ENCODE measurements at regions of chrX and their contacts with region 1.

Region 1: DNA sequence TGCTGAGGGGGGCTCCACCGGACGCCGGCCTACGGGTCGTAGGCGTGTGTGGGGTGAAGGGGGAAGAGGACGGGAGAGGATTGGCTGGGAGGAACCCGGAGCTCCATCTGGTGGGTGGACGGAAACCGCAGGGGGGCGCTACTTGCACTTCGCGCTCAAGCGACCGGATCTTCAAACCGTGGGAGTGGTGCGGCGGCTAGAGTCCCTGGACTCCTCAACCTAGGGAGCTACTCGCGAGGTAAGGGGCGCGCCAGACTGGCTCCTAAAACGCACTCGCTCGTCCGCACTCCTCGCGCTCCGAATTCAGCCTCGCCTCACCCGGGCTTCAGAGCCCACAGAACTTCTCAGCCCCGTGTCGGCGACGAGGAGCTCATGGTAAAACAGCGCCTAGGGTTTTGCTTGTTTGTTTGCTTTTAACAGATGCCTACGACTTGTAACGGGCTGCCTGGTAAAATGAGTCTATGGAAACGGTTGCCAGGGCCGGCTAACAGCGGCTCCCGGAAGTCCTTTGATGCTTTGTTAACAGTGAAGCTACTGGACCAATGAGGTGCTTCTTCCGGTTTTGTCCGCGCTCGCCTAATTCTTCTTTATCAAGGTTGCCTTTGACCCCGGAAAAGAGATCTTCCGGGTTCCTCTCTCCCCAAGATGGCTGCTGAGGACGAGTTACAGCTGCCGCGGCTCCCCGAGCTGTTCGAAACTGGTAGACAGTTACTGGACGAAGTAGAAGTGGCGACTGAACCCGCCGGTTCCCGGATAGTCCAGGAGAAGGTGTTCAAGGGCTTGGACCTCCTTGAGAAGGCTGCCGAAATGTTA is at the start of gene IGBP1:
- DNase-seq: peak; percentile 80
- H3K4me3 ChIP-seq: peak within 1 kb of the TSS; percentile 62 to 96 (median 79)
- H3K27ac ChIP-seq: peak within 1 kb of the TSS; percentile 95
- H3K4me1 ChIP-seq: peaks cover 16% of the 10 kb centered on the region
- H3K27me3 ChIP-seq: no peaks in the 10 kb centered on the region
- CTCF ChIP-seq: peak; percentile 63 to 79
- POLR2A ChIP-seq: no peak
- total RNA-seq, gene IGBP1: 38.1 and 40.4 TPM in 2 replicates

Region 2: DNA sequence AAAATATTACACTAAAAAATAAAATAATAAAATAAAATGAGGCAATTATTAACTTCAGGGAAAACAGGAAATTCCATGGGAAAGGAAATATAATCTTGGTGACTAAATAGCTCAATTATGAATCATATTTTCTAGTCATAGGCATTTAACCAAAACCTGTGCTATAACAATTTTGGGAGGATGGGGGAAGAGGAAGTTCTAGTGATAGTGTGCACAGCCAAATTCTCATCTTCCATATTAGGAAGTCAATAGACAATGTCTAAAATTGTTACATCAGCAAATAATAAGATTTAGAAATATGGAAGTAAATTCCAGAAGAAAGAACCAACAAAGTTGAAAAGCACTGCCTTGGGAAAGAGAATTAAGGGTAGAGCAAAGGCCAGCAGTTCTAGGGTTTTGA is 86.5 kb before region 1 on chrX:
- CTCF ChIA-PET with region 1: interaction called, 3 read pairs
- POLR2A ChIA-PET with region 1: no interaction called
- dilution Hi-C with region 1: no loop called
- intact Hi-C with region 1: loop called (anchors 1 kb)
- DNase-seq: peak; percentile 48
- H3K4me3 ChIP-seq: no peak overlapping the region
- H3K27ac ChIP-seq: peak overlapping the region; percentile 75
- H3K4me1 ChIP-seq: peaks cover 25% of the 10 kb centered on the region
- H3K27me3 ChIP-seq: no peaks in the 10 kb centered on the region
- CTCF ChIP-seq: no peak
- POLR2A ChIP-seq: no peak

Region 3: DNA sequence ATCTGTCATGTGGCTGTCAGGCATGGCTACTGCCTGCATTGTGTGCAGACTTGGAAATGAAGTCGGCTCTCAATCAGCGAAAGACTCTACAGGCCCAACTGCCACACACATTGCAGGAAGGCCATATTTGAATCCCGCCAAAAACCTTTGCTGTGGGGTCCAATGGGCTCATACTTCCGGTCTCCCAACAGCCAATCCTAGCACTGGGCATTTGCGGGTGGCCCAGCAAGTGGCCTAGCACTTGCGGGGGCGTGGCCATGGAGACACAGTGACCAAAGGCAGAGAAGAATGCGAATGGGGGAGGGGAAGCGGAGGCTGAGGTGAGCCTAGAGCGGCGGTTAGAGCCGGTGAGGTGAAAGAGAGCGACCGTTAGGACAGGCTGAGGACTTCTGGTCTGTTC is 71.4 kb before region 1 on chrX and contains the start of gene OTUD6A:
- CTCF ChIA-PET with region 1: no interaction called
- POLR2A ChIA-PET with region 1: no interaction called
- dilution Hi-C with region 1: no loop called
- intact Hi-C with region 1: no loop called
- DNase-seq: no peak
- H3K4me3 ChIP-seq: no peak within 1 kb of the TSS
- H3K27ac ChIP-seq: no peak within 1 kb of the TSS
- H3K4me1 ChIP-seq: no peaks in the 10 kb centered on the region
- H3K27me3 ChIP-seq: no peaks in the 10 kb centered on the region
- CTCF ChIP-seq: no peak
- POLR2A ChIP-seq: no peak
- total RNA-seq, gene OTUD6A: not detected in 2 replicates

Region 4: DNA sequence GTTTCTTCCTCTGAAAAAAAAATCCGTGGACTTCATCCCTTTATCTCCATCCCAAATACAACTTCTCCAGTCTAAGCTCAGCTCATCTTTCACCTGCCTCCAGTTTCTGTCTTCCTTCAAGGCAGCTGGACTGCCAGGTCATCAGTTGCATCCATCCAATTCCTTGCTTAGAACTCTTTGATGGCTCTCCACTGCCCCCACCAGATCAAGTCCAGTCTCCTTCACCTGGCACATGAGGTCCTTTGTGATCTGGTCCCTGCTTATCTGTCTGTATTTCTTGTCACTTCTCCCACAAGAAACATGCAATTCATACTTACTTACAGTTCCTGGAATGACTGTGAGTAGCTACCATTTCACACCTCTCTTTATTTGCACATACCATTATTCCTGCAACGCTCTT is 37.5 kb before region 1 on chrX:
- CTCF ChIA-PET with region 1: interaction called, 10 read pairs
- POLR2A ChIA-PET with region 1: no interaction called
- dilution Hi-C with region 1: no loop called
- intact Hi-C with region 1: loop called (anchors 1 kb)
- DNase-seq: peak; percentile 31
- H3K4me3 ChIP-seq: no peak overlapping the region
- H3K27ac ChIP-seq: no peak overlapping the region
- H3K4me1 ChIP-seq: no peaks in the 10 kb centered on the region
- H3K27me3 ChIP-seq: no peaks in the 10 kb centered on the region
- CTCF ChIP-seq: peak in 1 of 2 donors; percentile 26
- POLR2A ChIP-seq: no peak

Region 5: DNA sequence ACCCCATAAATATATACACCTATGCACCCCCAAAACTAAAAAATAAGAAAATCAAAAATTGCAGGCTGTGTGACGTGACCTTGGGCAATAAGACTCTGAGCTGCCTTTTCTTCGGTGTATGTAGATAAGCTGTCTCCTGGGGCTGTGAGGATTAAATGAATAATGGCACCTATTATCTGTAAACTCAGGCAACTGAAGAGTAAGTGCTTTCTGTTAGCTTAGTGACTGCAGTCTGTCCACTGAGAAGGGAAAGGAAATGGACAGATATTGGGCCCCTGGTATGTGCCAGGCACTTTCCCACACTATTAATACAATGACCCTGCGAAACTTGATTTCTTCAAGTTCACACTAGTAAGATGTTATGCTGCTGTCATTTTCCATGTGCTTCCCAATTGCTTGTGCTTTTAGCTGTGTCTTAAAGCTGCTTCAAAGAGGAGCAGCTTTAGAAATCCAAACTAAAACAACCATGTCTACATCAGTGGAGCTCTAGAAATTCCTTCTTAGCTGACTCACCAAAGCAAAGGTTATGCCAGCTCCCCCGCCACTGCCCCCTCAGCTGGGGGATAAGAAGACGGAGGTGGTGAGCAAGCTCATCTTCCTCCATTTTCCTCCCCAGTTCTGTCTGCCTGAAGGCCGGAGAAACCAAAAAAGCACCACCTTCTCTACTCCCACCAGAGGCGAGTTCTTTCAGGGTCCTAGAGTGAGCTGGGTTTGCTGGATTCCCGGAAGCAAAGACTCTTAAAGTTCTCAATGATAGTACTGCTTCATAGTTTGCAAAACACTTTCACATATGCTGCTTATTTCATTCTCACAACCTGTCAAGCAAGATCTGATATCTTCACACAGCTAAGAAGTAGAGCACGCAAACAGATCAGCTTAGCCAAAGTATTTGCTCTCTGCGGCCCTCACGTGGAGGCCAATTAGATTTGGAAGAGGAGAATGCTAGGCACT is 35.0 kb after region 1 on chrX:
- CTCF ChIA-PET with region 1: interaction called, 30 read pairs
- POLR2A ChIA-PET with region 1: interaction called, 4 read pairs
- dilution Hi-C with region 1: no loop called
- intact Hi-C with region 1: no loop called
- DNase-seq: peak; percentile 34
- H3K4me3 ChIP-seq: no peak overlapping the region
- H3K27ac ChIP-seq: peak overlapping the region; percentile 28
- H3K4me1 ChIP-seq: peaks cover 30% of the 10 kb centered on the region
- H3K27me3 ChIP-seq: no peaks in the 10 kb centered on the region
- CTCF ChIP-seq: no peak
- POLR2A ChIP-seq: no peak

Region 6: GRCh38 chrX:70262952-70263567 is 129.6 kb after region 1 on chrX:
- CTCF ChIA-PET with region 1: interaction called, 24 read pairs
- POLR2A ChIA-PET with region 1: no interaction called
- dilution Hi-C with region 1: no loop called
- intact Hi-C with region 1: loop called (anchors 1 kb)
- DNase-seq: peak; percentile 9
- H3K4me3 ChIP-seq: no peak overlapping the region
- H3K27ac ChIP-seq: no peak overlapping the region
- H3K4me1 ChIP-seq: no peaks in the 10 kb centered on the region
- H3K27me3 ChIP-seq: no peaks in the 10 kb centered on the region
- CTCF ChIP-seq: peak; percentile 20 to 58
- POLR2A ChIP-seq: no peak

Region 7: DNA sequence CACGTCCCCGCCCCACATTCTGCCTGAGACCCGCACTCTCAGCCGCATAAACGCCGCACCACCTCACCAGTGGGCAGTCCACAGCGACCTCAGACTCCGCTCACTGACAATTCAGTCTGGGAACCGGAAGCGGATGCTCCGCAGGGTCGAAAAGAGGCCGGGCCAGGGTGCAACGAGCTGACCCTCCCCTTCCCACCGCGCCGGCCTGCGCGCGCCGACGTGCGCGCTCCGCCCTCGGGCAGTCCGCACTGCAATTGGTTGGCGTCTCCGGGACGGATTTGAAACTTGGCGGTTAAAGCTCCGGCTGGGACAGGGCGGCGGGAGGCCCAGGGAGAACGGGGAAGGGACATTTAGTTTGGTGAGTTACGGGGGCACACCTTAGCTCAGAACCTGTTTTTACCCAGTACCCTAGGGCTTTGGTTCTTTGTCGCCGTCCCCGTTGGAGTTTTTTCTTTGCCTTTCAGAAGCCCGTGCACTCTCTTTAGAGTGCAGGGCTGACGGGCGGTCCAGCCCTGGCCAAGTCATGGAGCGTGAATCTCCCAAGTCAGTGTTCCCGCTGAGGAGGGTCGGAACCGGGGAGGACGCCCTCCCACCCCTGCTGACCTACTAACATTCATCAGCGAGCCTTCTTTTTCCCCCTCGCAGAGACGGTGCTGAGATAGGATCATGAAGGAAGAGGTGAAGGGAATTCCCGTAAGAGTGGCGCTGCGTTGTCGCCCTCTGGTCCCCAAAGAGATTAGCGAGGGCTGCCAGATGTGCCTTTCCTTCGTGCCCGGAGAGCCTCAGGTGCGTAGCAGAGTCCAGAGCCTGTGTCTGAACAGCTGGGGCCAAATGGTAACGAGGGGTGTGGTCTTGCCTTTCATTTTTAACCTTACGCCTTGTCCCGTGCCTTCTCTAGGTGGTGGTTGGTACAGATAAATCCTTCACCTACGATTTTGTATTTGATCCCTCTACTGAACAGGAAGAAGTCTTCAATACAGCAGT is 156.6 kb after region 1 on chrX and contains the starts of genes KIF4A and PDZD11:
- CTCF ChIA-PET with region 1: interaction called, 6 read pairs
- POLR2A ChIA-PET with region 1: no interaction called
- dilution Hi-C with region 1: no loop called
- intact Hi-C with region 1: loop called (anchors 1 kb)
- DNase-seq: peak; percentile 83
- H3K4me3 ChIP-seq: peak within 1 kb of the TSS; percentile 70 to 86 (median 84)
- H3K27ac ChIP-seq: peak within 1 kb of the TSS; percentile 66
- H3K4me1 ChIP-seq: peaks cover 18% of the 10 kb centered on the region
- H3K27me3 ChIP-seq: no peaks in the 10 kb centered on the region
- CTCF ChIP-seq: no peak
- POLR2A ChIP-seq: peak; percentile 71
- total RNA-seq, gene KIF4A: 34.4 and 41.3 TPM in 2 replicates
- total RNA-seq, gene PDZD11: 44.5 and 45.6 TPM in 2 replicates

Region 8: DNA sequence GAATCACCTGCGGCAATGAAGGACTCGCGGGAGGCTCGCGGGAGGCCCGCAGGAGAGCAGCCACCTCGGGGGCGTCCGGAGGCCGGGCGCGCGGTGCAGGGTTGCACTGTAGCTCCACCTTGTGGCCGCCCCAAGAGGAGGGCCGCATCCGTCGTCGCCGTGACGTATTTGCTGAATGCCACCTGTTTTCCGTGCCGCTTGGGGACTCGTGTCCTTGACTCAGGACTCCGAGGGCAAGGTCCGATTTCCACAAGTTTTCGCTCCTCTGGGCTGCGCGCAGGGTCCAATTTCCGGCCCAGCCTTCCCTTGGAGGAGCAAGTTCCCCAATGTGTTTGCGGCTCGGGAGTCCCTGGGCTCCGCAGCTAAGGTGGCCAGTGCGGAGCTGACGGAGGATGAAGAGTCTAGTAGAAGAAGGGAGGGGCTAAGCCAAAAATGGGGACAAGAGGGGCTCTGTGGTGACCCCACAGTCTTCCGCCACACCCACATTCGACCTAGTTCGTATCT is 300.4 kb after region 1 on chrX:
- CTCF ChIA-PET with region 1: interaction called, 15 read pairs
- POLR2A ChIA-PET with region 1: no interaction called
- dilution Hi-C with region 1: no loop called
- intact Hi-C with region 1: loop called (anchors 1 kb)
- DNase-seq: peak; percentile 49
- H3K4me3 ChIP-seq: peak overlapping the region; percentile 39 to 86 (median 52)
- H3K27ac ChIP-seq: peak overlapping the region; percentile 67
- H3K4me1 ChIP-seq: peaks cover 9% of the 10 kb centered on the region
- H3K27me3 ChIP-seq: no peaks in the 10 kb centered on the region
- CTCF ChIP-seq: peak; percentile 60 to 81
- POLR2A ChIP-seq: no peak

Measured in endothelial cell of umbilical vein (primary cell).